ENCODE measurements at regions of chr12 and their contacts with region 1.

Region 1: DNA sequence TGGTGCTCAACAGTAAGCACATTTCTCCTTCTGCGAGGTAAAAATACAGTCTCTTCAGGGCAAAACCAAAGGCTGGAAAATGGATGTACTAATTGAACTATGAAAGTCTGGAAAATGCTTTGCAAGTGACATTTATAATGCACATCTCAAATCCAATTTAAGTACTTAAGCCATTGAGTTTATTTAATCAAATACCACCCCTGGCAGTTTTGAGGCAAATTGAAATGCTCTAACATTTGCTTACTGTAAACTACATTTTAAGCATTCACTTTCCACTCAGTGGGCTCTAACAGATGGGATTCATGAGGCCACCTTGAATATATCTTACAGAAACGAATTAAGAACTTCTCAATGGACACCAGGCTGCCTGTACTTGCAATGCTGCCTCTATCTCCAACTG is 69.7 kb downstream of the HELB start:
- DNase-seq: no peak
- ATAC-seq: no peak
- H3K4me3 ChIP-seq: no peak overlapping the region
- H3K4me3 Mint-ChIP-seq: no peak overlapping the region
- H3K27ac ChIP-seq: no peak overlapping the region
- H3K27ac Mint-ChIP-seq: no peak overlapping the region
- H3K4me1 ChIP-seq: no peaks in the 10 kb centered on the region
- H3K4me1 Mint-ChIP-seq: no peaks in the 10 kb centered on the region
- H3K27me3 ChIP-seq: no peaks in the 10 kb centered on the region
- H3K27me3 Mint-ChIP-seq: no peaks in the 10 kb centered on the region

Region 2: GRCh38 chr12:66335746-66336145 is 36.2 kb before region 1 on chr12:
- CTCF ChIA-PET with region 1: no interaction called
- POLR2A ChIA-PET with region 1: no interaction called
- intact Hi-C with region 1: loop called in 1 of 2 experiments (anchors 5 kb)
- DNase-seq: no peak
- ATAC-seq: no peak
- H3K4me3 ChIP-seq: no peak overlapping the region
- H3K4me3 Mint-ChIP-seq: no peak overlapping the region
- H3K27ac ChIP-seq: no peak overlapping the region
- H3K27ac Mint-ChIP-seq: no peak overlapping the region
- H3K4me1 ChIP-seq: no peaks in the 10 kb centered on the region
- H3K4me1 Mint-ChIP-seq: peaks cover 6 to 29% (median 18%) of the 10 kb centered on the region in 7 donors
- H3K27me3 ChIP-seq: no peaks in the 10 kb centered on the region
- H3K27me3 Mint-ChIP-seq: no peaks in the 10 kb centered on the region